ENCODE measurements at regions of chr2 and their contacts with region 1.

Region 1: DNA sequence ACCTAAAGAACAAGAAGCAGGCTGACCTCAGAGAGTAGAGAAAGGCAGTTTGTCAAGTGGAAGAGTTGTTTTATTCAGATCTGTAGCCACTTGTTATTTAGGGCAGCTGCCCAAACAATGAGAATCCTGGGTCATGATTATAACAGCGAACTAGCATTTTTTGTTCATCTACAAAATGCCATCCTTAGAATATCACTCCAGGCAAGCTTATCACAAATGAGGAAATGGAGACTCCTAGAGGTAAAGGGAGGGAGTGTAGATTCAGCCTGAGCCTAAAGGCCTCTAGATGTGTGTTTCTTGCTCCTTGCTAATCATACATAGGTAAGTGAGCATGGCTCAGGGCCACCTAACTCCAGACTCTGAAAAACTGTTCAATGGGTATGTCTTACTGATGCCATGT is 126.1 kb downstream of the HNMT start:
- DNase-seq: peak; percentile 58
- ATAC-seq: peak; percentile 74
- H3K4me3 ChIP-seq: no peak overlapping the region
- H3K27ac ChIP-seq: no peak overlapping the region
- H3K4me1 ChIP-seq: no peaks in the 10 kb centered on the region
- H3K27me3 ChIP-seq: peaks cover 4% of the 10 kb centered on the region
- CTCF ChIP-seq: peak; percentile 91
- POLR2A ChIP-seq: no peak; the same call in 1 of the 2 replicates
- RAD21 ChIP-seq: peak; percentile 89

Region 2: GRCh38 chr2:137947728-137948336 is 142.5 kb before region 1 on chr2:
- CTCF ChIA-PET with region 1: interaction called, 6 read pairs
- POLR2A ChIA-PET with region 1: no interaction called
- dilution Hi-C with region 1: no loop called
- in situ Hi-C with region 1: loop called (anchors 10 kb)
- intact Hi-C with region 1: loop called (anchors 1 kb)
- DNase-seq: peak; percentile 79
- ATAC-seq: peak; percentile 72
- H3K4me3 ChIP-seq: no peak overlapping the region
- H3K27ac ChIP-seq: no peak overlapping the region
- H3K4me1 ChIP-seq: no peaks in the 10 kb centered on the region
- H3K27me3 ChIP-seq: no peaks in the 10 kb centered on the region; the same call in 1 of the 2 replicates
- CTCF ChIP-seq: peak; percentile 75
- POLR2A ChIP-seq: no peak
- RAD21 ChIP-seq: peak; percentile 79

Region 3: GRCh38 chr2:137969418-137969765 is 120.9 kb before region 1 on chr2:
- CTCF ChIA-PET with region 1: no interaction called
- POLR2A ChIA-PET with region 1: interaction called, 29 read pairs
- dilution Hi-C with region 1: no loop called
- in situ Hi-C with region 1: no loop called
- intact Hi-C with region 1: no loop called
- DNase-seq: peak; percentile 95
- ATAC-seq: peak; percentile 54
- H3K4me3 ChIP-seq: no peak overlapping the region
- H3K27ac ChIP-seq: no peak overlapping the region
- H3K4me1 ChIP-seq: peaks cover 5% of the 10 kb centered on the region
- H3K27me3 ChIP-seq: no peaks in the 10 kb centered on the region
- CTCF ChIP-seq: no peak
- POLR2A ChIP-seq: no peak
- RAD21 ChIP-seq: no peak

Region 4: DNA sequence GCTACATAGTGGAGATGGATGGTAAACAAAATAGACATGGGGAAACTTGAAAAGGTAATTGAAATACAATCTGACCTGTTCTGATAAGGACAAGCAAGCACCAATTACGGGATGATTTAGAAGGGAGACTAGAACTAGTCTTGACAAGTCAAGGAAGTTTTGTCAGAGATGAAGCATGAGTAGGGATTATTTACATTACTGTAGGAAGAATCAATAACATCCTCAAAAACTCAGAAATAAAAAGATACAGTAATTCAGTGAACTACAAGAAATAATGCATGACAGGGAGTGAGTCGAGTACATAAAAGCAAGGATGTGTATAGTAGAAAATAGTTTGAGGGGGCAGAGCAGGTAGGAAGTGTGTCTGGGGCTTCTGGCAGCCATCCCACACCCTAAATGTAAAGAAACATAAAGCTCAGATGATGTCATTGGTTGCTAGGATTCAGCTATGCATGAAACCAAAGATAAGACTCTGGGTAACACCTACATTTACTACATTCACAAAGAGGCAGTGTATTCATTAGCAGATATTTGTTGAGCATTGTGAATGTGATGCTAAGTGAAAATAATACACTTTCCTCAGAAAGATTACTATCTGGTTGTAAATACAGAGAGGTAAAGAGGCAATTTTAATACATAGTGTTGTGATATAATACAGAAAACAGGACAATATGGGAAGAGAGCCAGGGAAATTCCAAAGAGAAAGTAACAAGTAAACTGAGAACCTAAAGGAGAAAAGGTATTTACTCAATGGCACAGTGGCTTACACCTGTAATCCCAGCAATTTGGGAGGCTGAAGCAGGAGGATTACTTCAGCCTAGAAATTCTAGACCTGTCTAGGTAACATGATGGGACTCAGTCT is 32.0 kb after region 1 on chr2:
- CTCF ChIA-PET with region 1: no interaction called
- POLR2A ChIA-PET with region 1: no interaction called
- dilution Hi-C with region 1: no loop called
- in situ Hi-C with region 1: no loop called
- intact Hi-C with region 1: no loop called
- DNase-seq: no peak
- ATAC-seq: no peak
- H3K4me3 ChIP-seq: no peak overlapping the region
- H3K27ac ChIP-seq: no peak overlapping the region
- H3K4me1 ChIP-seq: 0 out of 2 replicates have a peak, but pooled peaks cover 2% of the 10 kb centered on the region
- H3K27me3 ChIP-seq: no peaks in the 10 kb centered on the region
- CTCF ChIP-seq: no peak
- POLR2A ChIP-seq: no peak
- RAD21 ChIP-seq: no peak

Region 5: DNA sequence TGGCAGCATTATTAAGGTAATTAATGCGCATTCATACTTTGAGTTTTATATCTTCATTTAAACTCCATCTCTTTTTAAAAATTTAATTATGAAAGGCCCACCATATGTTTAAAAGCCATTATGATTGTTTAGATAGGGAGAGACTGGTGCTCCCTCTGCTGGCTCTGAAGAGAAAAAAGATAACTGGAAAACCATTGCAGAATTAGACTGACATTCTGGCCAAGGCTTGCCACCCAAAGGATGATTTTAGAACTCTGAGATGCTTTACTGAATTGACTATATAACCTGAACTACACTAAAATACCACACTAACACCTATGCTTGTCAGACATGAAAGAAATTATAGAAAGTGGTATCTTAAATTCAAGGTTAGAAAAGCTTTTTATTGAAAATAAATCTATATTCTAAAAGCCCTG is 283.7 kb after region 1 on chr2:
- CTCF ChIA-PET with region 1: interaction called, 3 read pairs
- POLR2A ChIA-PET with region 1: no interaction called
- dilution Hi-C with region 1: no loop called
- in situ Hi-C with region 1: no loop called
- intact Hi-C with region 1: loop called (anchors 2 kb)
- DNase-seq: peak; percentile 52
- ATAC-seq: peak; percentile 73
- H3K4me3 ChIP-seq: no peak overlapping the region
- H3K27ac ChIP-seq: no peak overlapping the region
- H3K4me1 ChIP-seq: no peaks in the 10 kb centered on the region
- H3K27me3 ChIP-seq: no peaks in the 10 kb centered on the region
- CTCF ChIP-seq: peak; percentile 70
- POLR2A ChIP-seq: no peak
- RAD21 ChIP-seq: peak; percentile 72

Region 6: GRCh38 chr2:138787053-138787666 is 696.8 kb after region 1 on chr2:
- CTCF ChIA-PET with region 1: no interaction called
- POLR2A ChIA-PET with region 1: no interaction called
- dilution Hi-C with region 1: no loop called
- in situ Hi-C with region 1: no loop called
- intact Hi-C with region 1: loop called (anchors 5 kb)
- DNase-seq: peak; percentile 37
- ATAC-seq: peak; percentile 44; the same call in 1 of the 2 replicates
- H3K4me3 ChIP-seq: no peak overlapping the region
- H3K27ac ChIP-seq: no peak overlapping the region
- H3K4me1 ChIP-seq: no peaks in the 10 kb centered on the region
- H3K27me3 ChIP-seq: peaks cover 2% of the 10 kb centered on the region; the same call in 1 of the 2 replicates
- CTCF ChIP-seq: peak; percentile 68
- POLR2A ChIP-seq: no peak
- RAD21 ChIP-seq: peak; percentile 64

Region 7: GRCh38 chr2:138827426-138828054 is 737.2 kb after region 1 on chr2:
- CTCF ChIA-PET with region 1: no interaction called
- POLR2A ChIA-PET with region 1: no interaction called
- dilution Hi-C with region 1: no loop called
- in situ Hi-C with region 1: no loop called
- intact Hi-C with region 1: loop called (anchors 2 kb)
- DNase-seq: peak; percentile 68
- ATAC-seq: peak; percentile 94
- H3K4me3 ChIP-seq: no peak overlapping the region
- H3K27ac ChIP-seq: no peak overlapping the region
- H3K4me1 ChIP-seq: no peaks in the 10 kb centered on the region
- H3K27me3 ChIP-seq: no peaks in the 10 kb centered on the region
- CTCF ChIP-seq: peak; percentile 72
- POLR2A ChIP-seq: no peak
- RAD21 ChIP-seq: peak; percentile 70

Measured in IMR-90 (cell line).